AG04449 (cell line): ENCODE measurements at regions of chr6 and their contacts with region 1.

Region 1: DNA sequence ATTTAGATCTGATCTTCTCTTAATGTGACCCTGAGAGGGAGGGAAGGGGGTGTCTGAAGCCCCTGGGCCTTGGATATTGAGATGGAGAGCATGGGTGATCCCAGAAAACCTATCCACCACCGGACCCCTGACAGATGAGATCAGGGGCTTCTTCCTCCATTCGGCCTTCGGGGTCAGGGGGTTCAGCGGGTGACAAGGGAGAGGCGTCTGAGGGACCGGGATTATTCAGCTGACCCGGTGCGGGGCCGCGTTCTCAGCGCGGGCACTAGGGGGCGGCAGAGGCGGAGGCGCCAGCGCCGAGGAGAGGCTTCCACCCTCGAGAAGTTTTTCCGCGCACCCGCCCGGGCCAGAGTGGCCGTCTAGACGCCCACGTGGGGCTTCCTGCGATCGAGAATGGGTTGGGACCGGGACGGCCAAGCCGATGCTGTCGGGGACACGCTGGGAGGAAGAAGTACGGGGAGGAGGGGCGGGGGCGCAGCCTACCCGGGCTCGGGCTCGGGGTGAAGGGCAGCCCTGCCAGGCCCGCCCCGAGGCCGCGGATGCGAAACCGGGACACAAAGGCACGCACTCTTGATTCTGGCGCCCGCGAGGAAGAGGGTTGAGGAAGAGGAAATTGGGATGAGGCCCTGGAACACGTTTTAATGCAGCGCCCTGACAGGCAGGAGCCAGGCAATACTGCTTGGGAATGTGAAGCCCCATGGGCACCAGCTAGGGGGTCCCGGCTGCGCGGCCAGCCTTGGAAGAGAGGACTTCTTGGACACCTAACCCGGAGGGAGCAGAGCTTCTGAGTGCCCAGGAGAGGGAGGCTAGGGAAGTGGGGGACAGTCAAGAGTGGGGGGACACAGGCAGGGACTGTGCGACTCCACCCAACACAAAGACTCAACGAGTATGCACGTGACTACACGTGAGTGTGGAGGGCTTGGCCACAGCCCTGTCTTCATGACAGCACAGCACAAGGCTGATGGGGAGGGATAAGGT is 30.6 kb downstream of the COL11A2 start:
- DNase-seq: no peak
- H3K4me3 ChIP-seq: peak overlapping the region; percentile 57
- CTCF ChIP-seq: peak; percentile 94

Region 2: GRCh38 chr6:33104893-33105292 is 56.8 kb before region 1 on chr6:
- CTCF ChIA-PET with region 1: no interaction called
- POLR2A ChIA-PET with region 1: no interaction called
- DNase-seq: no peak
- H3K4me3 ChIP-seq: no peak overlapping the region
- CTCF ChIP-seq: no peak

Region 3: GRCh38 chr6:33172688-33173534 is 11.3 kb after region 1 on chr6:
- CTCF ChIA-PET with region 1: interaction called, 43 read pairs
- POLR2A ChIA-PET with region 1: no interaction called
- DNase-seq: no peak
- H3K4me3 ChIP-seq: no peak overlapping the region
- CTCF ChIP-seq: peak; percentile 67

Region 4: GRCh38 chr6:33367009-33367714 is 205.5 kb after region 1 on chr6:
- CTCF ChIA-PET with region 1: no interaction called
- POLR2A ChIA-PET with region 1: no interaction called
- DNase-seq: no peak
- H3K4me3 ChIP-seq: no peak overlapping the region
- CTCF ChIP-seq: no peak